Aorta (tissue), 5 donors: ENCODE measurements at regions of chr13 and their contacts with region 1.

Region 1: DNA sequence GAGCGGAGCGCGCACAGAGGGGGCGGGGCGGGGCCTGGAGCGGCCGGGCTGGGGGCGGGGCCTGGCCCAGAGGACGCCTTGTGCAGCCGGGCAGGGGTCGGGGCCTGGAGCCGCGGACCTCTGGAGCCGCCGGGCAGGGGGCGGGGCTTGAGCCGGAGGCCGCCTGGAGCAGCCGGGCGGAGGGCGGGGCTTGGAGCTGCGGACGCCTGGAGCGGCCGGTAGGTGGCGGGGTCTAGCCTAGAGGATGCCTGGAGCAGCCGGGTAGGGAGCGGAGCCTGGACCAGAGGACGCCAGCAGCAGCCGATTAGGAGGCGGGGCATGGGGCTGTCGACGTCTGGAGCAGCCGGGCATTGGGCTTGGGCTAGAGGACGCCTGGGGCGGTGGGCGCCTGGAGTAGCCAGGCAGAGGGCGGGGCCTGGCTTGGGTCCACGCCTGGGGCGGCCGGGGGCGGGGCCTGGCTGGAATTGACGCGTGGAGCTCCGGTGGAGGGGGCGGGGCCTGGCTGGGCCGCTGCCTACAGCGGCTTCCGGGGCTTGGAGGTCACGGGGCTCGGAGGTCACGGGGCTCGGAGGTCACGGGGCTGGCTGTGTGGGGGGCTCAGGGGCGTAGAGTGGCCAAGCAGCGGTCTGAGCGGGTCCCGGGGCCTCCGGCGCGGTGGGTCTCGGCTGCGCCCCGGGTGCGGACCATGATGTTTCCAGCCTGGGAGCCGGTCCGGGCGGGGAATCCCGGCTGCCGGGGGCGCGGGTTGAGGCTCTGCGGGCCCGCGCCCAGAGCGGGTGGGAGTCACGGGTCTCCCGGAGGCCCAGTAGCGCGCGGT is at the start of gene ANKRD10:
- DNase-seq: peak; percentile 100
- ATAC-seq: peak; percentile 96
- H3K4me3 ChIP-seq: peak within 1 kb of the TSS; percentile 44 to 59
- H3K27ac ChIP-seq: peak within 1 kb of the TSS; percentile 87 to 92
- H3K4me1 ChIP-seq: peaks cover 3 to 4% of the 10 kb centered on the region in 2 donors
- H3K27me3 ChIP-seq: no peaks in the 10 kb centered on the region
- total RNA-seq, gene ANKRD10: 184 to 275 TPM

Region 2: DNA sequence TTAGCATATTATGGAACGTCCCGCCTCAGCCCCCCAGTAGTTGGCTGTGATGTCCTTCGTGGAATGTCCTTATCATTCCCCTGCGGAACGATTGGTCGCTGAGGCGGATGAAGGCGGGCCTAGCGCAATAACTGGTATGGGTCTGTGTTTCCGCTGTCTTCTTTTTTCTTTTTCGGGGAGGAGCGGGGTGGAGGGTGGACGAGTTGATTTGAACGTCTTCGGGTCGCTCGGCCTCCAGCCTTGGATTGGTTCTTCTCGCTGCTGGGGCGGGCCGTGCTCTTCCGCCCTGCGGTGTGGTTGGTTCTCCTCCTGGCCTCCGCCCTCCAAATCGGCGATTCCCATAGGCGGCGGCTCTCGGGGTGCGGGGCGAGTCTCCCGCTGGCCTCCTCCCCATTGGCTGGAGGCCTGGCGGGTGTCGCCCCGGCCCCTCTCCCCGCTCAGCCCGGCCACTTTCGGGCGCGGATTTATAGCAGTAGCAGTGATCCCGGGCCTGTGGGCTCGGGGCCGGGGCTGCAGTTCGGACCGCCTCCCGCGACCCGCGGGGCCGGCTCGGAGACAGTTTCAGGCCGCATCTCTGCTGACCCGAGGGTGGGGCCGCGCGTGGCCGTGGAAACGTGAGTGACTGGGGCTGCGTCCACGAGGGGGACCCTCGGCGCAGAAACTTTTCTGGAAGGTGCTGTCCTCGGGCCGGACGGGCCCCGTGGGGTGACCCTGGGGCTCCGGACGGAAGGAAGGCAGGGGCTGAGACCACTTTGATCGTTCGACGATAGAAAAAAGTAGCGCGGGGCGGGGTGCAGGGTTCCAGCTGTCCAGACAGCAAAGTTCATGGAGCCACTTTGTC is 199.7 kb before region 1 on chr13:
- intact Hi-C with region 1: loop called in 1 of 2 experiments (anchors 2 kb)
- DNase-seq: peak; percentile 98 to 99
- ATAC-seq: peak; percentile 86
- H3K4me3 ChIP-seq: peak overlapping the region; percentile 59 to 64
- H3K27ac ChIP-seq: peak overlapping the region; percentile 2 to 85
- H3K4me1 ChIP-seq: no peaks in the 10 kb centered on the region
- H3K27me3 ChIP-seq: no peaks in the 10 kb centered on the region

Region 3: DNA sequence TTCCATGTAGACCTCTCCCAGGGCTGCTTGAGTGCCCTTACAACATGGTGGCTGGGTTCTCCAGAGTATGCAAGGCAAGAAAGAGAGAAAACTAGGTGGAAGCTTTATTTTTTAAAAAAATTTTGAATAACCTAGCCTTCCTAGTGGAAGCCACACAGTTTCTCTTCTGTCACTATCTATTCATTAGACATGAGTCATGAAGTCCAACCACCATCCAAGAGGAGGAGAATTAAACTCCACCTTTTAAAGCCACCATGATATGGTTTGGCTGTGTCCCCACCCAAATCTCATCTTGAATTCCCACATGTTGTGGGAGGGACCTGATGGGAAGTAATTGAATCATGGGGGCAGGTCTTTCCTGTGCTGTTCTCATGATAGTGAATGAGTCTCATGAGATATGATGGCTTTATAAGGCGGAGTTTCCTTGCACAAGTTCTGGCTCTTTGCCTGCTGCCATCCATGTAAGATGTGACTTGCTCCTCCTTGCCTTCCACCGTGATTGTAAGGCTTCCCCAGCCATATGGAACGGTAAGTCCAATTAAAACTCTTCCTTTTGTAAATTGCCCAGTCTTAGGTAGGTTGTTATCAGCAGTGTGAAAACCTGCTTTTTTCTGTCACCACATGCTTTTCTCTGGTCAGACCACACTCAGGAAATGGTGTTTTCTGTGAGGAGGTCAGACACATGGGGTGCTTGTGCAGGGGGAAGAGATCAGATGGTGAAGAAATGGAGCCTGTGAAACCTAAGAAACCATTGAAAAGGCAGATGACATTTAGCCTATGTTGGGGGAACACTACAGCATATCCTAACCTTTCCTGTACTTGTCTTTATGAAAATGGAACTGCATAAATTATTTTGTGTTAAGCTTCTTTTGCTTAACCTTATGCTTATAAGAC is 58.1 kb before region 1 on chr13:
- intact Hi-C with region 1: no loop called
- DNase-seq: no peak
- ATAC-seq: no peak
- H3K4me3 ChIP-seq: no peak overlapping the region
- H3K27ac ChIP-seq: no peak overlapping the region
- H3K4me1 ChIP-seq: no peaks in the 10 kb centered on the region
- H3K27me3 ChIP-seq: no peaks in the 10 kb centered on the region

Region 4: GRCh38 chr13:110874508-110874960 is 40.7 kb before region 1 on chr13:
- intact Hi-C with region 1: loop called in 1 of 2 experiments (anchors 2 kb)
- DNase-seq: peak; percentile 93 to 96
- ATAC-seq: peak; percentile 87
- H3K4me3 ChIP-seq: peak overlapping the region in 1 of 2 donors; percentile 16
- H3K27ac ChIP-seq: no peak overlapping the region
- H3K4me1 ChIP-seq: peaks cover 0 to 2% of the 10 kb centered on the region in 2 donors
- H3K27me3 ChIP-seq: no peaks in the 10 kb centered on the region

Region 5: DNA sequence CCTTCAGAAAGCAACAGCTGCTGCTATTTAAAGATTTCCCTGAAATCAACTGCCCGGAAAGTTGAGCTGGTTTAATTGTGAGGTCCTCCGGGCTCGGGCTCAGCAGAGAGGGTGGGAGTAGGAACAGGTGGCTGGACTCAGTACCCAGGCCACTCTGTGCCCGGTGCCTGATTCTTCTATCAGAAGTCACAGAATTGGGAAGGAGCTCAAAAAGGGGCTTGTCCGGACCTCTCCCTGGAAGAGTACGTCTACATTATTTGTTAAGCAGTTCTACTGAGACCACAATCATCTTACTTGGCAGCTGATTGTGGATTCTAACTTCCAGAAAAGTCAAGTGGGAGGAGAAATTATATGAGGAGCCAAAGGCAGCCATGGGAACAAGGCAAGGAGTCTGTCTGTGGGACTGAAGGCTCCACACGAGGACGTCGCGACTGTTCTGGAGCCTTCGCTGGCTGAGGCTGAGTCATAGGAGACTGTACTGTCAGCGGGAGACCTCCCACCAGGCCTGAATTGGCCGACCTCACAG is 91.3 kb after region 1 on chr13:
- intact Hi-C with region 1: loop called (anchors 2 to 5 kb)
- DNase-seq: peak; percentile 93
- ATAC-seq: peak; percentile 97
- H3K4me3 ChIP-seq: no peak overlapping the region
- H3K27ac ChIP-seq: peak overlapping the region; percentile 89 to 98
- H3K4me1 ChIP-seq: peaks cover 0 to 3% of the 10 kb centered on the region in 2 donors
- H3K27me3 ChIP-seq: no peaks in the 10 kb centered on the region

Region 6: GRCh38 chr13:111046590-111047141 is 131.4 kb after region 1 on chr13:
- intact Hi-C with region 1: loop called in 1 of 2 experiments (anchors 2 kb)
- DNase-seq: peak in 1 of 2 donors; percentile 62
- ATAC-seq: no peak
- H3K4me3 ChIP-seq: no peak overlapping the region
- H3K27ac ChIP-seq: no peak overlapping the region
- H3K4me1 ChIP-seq: no peaks in the 10 kb centered on the region
- H3K27me3 ChIP-seq: no peaks in the 10 kb centered on the region

Region 7: DNA sequence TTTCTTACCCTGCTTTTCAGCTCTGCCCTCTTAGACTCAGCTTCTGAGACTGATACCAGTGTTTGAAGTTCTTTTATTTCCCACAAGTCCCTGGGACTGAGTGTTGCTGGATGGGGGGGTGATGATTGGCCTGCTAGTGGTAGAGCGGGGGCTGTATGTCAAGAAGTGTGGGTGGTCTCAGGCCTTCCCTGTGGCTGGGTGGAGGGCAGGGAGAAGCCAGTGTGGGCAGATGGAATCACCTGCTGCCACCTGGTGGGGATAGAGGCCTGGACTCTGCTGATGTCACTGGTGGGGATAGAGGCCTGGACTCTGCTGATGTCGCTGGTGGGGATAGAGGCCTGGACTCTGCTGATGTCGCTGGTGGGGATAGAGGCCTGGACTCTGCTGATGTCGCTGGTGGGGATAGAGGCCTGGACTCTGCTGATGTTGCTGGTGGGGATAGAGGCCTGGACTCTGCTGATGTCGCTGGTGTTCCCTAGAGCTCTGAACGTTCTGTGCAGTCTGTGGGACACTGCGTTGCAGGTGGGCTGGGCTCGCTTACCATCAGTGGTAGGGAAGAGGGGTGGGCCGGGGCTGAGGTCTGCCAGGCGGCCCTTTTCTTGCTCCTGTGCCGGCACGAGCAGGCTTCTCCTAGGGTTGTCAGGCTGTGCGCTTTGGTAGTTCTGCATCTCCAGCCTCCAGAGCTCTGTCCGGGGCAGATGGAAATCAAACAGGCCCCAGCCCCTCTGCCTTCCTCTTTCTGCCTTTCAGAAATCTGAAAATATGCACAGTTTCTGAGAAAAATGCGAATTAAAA is 301.1 kb after region 1 on chr13:
- intact Hi-C with region 1: loop called (anchors 10 kb)
- DNase-seq: peak in 1 of 2 donors; percentile 82
- ATAC-seq: no peak
- H3K4me3 ChIP-seq: no peak overlapping the region
- H3K27ac ChIP-seq: peak overlapping the region in 1 of 2 donors; percentile 49
- H3K4me1 ChIP-seq: peaks cover 0 to 4% of the 10 kb centered on the region in 2 donors
- H3K27me3 ChIP-seq: no peaks in the 10 kb centered on the region

Region 8: GRCh38 chr13:111281751-111282311 is 366.6 kb after region 1 on chr13:
- intact Hi-C with region 1: loop called in 1 of 2 experiments (anchors 10 kb)
- DNase-seq: no peak
- ATAC-seq: peak; percentile 66
- H3K4me3 ChIP-seq: no peak overlapping the region
- H3K27ac ChIP-seq: peak overlapping the region; percentile 89 to 96
- H3K4me1 ChIP-seq: peaks cover 3 to 7% of the 10 kb centered on the region in 2 donors
- H3K27me3 ChIP-seq: no peaks in the 10 kb centered on the region

Region 9: GRCh38 chr13:111296417-111296816 is 381.2 kb after region 1 on chr13:
- intact Hi-C with region 1: no loop called
- DNase-seq: no peak
- ATAC-seq: no peak
- H3K4me3 ChIP-seq: no peak overlapping the region
- H3K27ac ChIP-seq: no peak overlapping the region
- H3K4me1 ChIP-seq: no peaks in the 10 kb centered on the region
- H3K27me3 ChIP-seq: no peaks in the 10 kb centered on the region